Dendritic cell treated with granulocyte-macrophage colony-stimulating factor and Interleukin-4, amounts not matched to agents 40 ng/mL and 50 ng/mL, for 4 days (primary cell): ENCODE measurements at regions of chr5 and their contacts with region 1.

Region 1: GRCh38 chr5:73792687-73793320 is 166.8 kb downstream of the ARHGEF28 start:
- H3K4me3 Mint-ChIP-seq: no peak overlapping the region
- H3K27ac Mint-ChIP-seq: no peak overlapping the region
- H3K4me1 Mint-ChIP-seq: peaks cover 11% of the 10 kb centered on the region
- H3K27me3 Mint-ChIP-seq: no peaks in the 10 kb centered on the region

Region 2: GRCh38 chr5:73591102-73591695 is 201.6 kb before region 1 on chr5:
- intact Hi-C with region 1: loop called (anchors 1 kb)
- H3K4me3 Mint-ChIP-seq: no peak overlapping the region
- H3K27ac Mint-ChIP-seq: no peak overlapping the region
- H3K4me1 Mint-ChIP-seq: no peaks in the 10 kb centered on the region
- H3K27me3 Mint-ChIP-seq: no peaks in the 10 kb centered on the region

Region 3: DNA sequence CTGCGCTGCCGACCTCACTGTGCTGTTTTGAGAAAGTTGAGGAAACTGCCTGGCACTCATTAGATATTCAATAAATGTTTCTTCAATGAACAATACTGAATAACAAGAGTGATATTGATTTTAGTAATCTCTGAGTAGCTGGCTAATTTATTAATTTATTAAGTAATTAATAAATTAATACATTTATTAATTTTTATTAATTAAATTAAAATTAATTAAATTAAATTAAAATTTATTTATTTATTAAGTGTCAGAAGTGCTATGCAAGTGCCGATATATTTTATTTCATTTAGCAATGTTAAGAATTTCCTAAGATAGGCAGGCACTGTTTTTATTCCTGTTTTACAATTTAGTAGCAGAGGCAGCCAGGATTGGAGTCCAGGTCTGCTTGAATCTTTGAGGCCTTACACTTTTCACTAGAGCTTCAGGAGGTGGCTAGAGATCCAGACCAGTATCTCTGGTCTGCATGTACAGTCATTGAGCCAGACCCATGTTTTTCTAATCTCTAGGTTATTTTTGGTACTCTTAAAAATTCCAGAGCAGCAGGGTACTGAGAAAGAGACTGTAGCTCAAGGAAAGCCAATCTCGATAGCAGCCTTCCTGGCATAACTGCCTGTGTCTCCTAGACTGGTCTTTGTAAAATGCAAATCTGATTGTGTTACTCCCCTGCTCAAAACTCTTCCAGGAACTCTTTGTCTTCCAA is 57.6 kb before region 1 on chr5:
- intact Hi-C with region 1: no loop called
- H3K4me3 Mint-ChIP-seq: no peak overlapping the region
- H3K27ac Mint-ChIP-seq: no peak overlapping the region
- H3K4me1 Mint-ChIP-seq: no peaks in the 10 kb centered on the region
- H3K27me3 Mint-ChIP-seq: peaks cover 3% of the 10 kb centered on the region

Region 4: GRCh38 chr5:74052441-74053221 is 259.8 kb after region 1 on chr5:
- intact Hi-C with region 1: no loop called
- H3K4me3 Mint-ChIP-seq: no peak overlapping the region
- H3K27ac Mint-ChIP-seq: no peak overlapping the region
- H3K4me1 Mint-ChIP-seq: no peaks in the 10 kb centered on the region
- H3K27me3 Mint-ChIP-seq: peaks cover 3% of the 10 kb centered on the region

Region 5: GRCh38 chr5:74105126-74105780 is 312.4 kb after region 1 on chr5:
- intact Hi-C with region 1: no loop called
- H3K4me3 Mint-ChIP-seq: no peak overlapping the region
- H3K27ac Mint-ChIP-seq: no peak overlapping the region
- H3K4me1 Mint-ChIP-seq: peaks cover 10% of the 10 kb centered on the region
- H3K27me3 Mint-ChIP-seq: peaks cover 2% of the 10 kb centered on the region